Head of caudate nucleus (tissue), 42 donors: ENCODE measurements at regions of chr4 and their contacts with region 1.

Region 1: GRCh38 chr4:69167300-69167699 is 47.2 kb downstream of the UGT2B11 start:
- DNase-seq: no peak

Region 2: GRCh38 chr4:68498413-68499007 is 668.8 kb before region 1 on chr4:
- intact Hi-C with region 1: loop called (anchors 10 kb)
- DNase-seq: peak in 40 of 42 donors; percentile 5 to 83 (median 56)

Region 3: GRCh38 chr4:69044247-69044646 is 123.1 kb before region 1 on chr4:
- intact Hi-C with region 1: no loop called
- DNase-seq: no peak